Mammary epithelial cell (primary cell): ENCODE measurements at regions of chr18 and their contacts with region 1.

Region 1: DNA sequence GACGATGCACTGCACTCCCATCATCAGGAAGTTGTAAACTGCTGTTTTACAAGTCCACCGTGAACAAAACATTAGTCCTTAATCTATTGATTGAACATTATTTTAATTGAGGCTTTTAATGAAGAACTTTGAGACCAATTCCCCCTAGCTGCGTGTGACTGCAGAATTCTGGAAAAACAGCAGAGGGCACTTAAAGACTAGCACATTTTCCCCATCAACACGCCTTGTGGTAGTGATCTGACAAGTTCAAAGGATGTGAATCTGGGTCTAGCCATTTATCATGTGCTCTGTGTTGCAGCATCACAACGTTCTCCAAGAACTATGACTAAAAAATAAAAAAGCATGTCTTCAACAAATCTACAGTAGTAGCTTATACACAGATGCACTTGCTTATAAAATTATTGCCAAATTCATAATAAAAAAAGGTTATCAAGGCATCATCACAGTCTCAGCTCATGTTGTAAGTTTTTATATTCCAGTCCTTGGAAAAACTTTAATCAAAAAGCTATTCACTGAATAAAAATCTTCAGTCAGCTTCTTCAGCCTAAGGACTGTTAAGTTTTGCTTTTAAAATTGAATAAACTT is 35.8 kb downstream of the SKOR2 start:
- DNase-seq: peak; percentile 39
- H3K4me3 ChIP-seq: no peak overlapping the region
- H3K27ac ChIP-seq: no peak overlapping the region
- H3K4me1 ChIP-seq: no peaks in the 10 kb centered on the region
- H3K27me3 ChIP-seq: no peaks in the 10 kb centered on the region
- CTCF ChIP-seq: peak; percentile 63 to 81

Region 2: DNA sequence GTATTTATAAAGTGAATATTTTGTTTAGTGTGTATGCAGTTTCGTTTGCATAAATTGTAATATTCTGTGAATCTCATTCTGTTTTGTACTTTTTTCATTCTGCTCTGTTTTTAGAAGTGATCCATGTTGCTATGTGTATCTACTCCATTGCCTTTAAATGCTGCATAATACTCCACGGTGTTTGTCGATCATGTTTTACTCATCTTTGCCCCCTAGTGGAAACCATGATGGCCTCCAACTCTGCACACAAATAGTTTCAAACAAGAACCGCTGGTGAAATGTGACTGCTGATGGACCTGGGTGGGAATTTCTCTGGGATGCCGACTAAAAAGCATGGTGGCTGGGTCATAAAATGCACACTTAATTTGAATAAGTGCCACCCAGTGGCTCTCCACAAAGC is 67.8 kb after region 1 on chr18:
- CTCF ChIA-PET with region 1: no interaction called
- dilution Hi-C with region 1: no loop called
- in situ Hi-C with region 1: no loop called
- intact Hi-C with region 1: loop called (anchors 2 kb)
- DNase-seq: no peak
- H3K4me3 ChIP-seq: no peak overlapping the region
- H3K27ac ChIP-seq: no peak overlapping the region
- H3K4me1 ChIP-seq: no peaks in the 10 kb centered on the region
- H3K27me3 ChIP-seq: peaks cover 1% of the 10 kb centered on the region
- CTCF ChIP-seq: peak; percentile 33 to 40

Region 3: DNA sequence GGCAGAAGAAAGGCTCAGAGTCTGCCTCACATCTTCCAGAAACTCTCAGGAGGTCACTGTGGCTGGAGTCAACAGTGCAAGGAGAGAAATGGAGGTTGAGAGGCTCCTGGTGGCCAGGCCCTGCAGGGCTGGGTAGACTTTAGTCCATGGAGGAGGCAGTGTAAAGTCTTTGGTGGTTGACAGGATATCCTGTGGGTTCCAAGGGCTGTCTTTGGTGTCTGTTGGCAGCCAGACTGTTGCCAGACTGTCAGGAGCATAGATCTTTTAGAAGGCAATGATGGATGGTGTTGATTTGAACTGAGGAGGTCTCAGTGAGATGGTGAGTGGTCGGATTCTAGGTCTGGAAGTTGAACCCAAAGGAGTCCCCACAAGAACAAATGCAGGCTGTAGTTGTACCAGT is 80.8 kb after region 1 on chr18:
- CTCF ChIA-PET with region 1: no interaction called
- dilution Hi-C with region 1: no loop called
- in situ Hi-C with region 1: no loop called
- intact Hi-C with region 1: no loop called
- DNase-seq: no peak
- H3K4me3 ChIP-seq: no peak overlapping the region
- H3K27ac ChIP-seq: no peak overlapping the region
- H3K4me1 ChIP-seq: no peaks in the 10 kb centered on the region
- H3K27me3 ChIP-seq: no peaks in the 10 kb centered on the region
- CTCF ChIP-seq: no peak